Caco-2 (cell line): ENCODE measurements at regions of chr4 and their contacts with region 1.

Region 1: DNA sequence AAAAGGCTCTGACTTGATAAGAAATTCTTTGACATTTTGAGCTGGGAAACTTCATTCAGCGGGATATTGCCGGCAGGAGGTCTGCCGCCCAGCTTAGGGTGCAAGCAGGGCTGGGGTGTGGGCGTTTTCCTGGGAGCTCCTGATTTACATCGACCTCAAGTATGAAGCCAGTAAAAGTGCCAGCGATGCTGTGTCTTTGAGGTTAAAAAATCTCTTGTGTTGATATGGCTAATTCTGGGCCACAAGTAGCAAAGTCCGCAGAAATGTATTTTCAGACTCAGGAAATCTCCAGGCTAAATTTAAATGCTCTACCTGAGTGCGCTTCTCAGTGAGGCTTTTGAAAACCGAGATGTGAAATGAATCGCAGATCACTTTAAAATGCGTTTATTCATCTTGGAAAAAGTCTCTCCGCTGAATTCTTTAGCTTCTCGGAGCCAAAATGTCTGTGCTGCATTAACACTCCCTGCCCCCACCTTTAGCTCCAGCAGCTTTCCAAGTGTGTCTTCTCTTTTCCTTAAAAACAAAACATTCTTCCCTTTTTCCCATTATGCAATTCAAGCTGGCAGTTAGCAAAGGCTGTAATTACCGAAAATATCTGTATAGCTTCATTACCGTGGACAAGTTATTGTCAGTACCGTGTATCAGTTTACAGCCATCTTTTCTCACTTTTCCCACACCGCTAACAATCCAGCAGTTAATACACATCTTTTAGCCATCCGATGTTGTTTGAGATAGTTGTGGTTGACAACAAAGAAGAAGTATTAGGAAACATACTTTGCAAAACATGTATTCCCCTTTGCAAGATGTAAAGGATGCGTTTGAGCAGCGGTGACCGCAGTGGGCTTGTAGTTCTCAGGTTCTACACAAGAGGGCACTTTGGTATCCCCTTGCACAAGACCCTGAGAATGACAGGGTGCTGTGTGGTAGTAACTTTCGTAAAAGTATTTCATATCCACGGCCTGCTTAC is 136.0 kb upstream of the STX18 start:
- DNase-seq: peak in 1 of 2 experiments; percentile 17
- H3K4me3 ChIP-seq: no peak overlapping the region
- H3K4me3 Mint-ChIP-seq: no peak overlapping the region
- H3K27ac Mint-ChIP-seq: peak overlapping the region; percentile 37
- H3K4me1 ChIP-seq: peaks cover 29% of the 10 kb centered on the region
- H3K4me1 Mint-ChIP-seq: peaks cover 29% of the 10 kb centered on the region
- H3K27me3 ChIP-seq: no peaks in the 10 kb centered on the region
- H3K27me3 Mint-ChIP-seq: no peaks in the 10 kb centered on the region
- CTCF ChIP-seq: peak; percentile 15 to 44

Region 2: DNA sequence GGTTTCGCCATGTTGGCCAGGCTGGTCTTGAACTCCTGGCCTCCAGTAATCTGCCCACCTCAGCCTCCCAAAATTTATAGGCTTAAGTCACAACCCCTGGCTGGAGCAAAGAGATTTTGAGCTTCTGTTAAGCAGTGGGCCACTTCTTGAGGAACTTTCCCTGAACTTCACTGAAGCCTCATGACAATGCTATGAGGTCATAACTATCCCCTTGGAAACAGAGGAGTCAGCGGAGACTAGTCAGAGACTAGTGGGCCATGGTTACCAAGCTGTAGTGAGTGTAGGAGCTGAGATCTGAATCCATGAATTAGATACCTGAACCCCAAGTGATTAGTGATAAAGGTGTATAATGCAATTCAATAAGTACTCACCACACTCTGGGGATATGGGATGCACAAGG is 36.5 kb after region 1 on chr4:
- CTCF ChIA-PET with region 1: no interaction called
- POLR2A ChIA-PET with region 1: no interaction called
- intact Hi-C with region 1: no loop called
- DNase-seq: no peak
- H3K4me3 ChIP-seq: no peak overlapping the region
- H3K4me3 Mint-ChIP-seq: no peak overlapping the region
- H3K27ac Mint-ChIP-seq: no peak overlapping the region
- H3K4me1 ChIP-seq: peaks cover 20% of the 10 kb centered on the region
- H3K4me1 Mint-ChIP-seq: peaks cover 20% of the 10 kb centered on the region
- H3K27me3 ChIP-seq: no peaks in the 10 kb centered on the region
- H3K27me3 Mint-ChIP-seq: no peaks in the 10 kb centered on the region
- CTCF ChIP-seq: no peak

Region 3: GRCh38 chr4:4762909-4763821 is 85.3 kb after region 1 on chr4:
- CTCF ChIA-PET with region 1: no interaction called
- POLR2A ChIA-PET with region 1: no interaction called
- intact Hi-C with region 1: no loop called
- DNase-seq: no peak
- H3K4me3 ChIP-seq: no peak overlapping the region
- H3K4me3 Mint-ChIP-seq: no peak overlapping the region
- H3K27ac Mint-ChIP-seq: no peak overlapping the region
- H3K4me1 ChIP-seq: no peaks in the 10 kb centered on the region
- H3K4me1 Mint-ChIP-seq: no peaks in the 10 kb centered on the region
- H3K27me3 ChIP-seq: no peaks in the 10 kb centered on the region
- H3K27me3 Mint-ChIP-seq: no peaks in the 10 kb centered on the region
- CTCF ChIP-seq: no peak

Region 4: GRCh38 chr4:4780729-4781244 is 102.9 kb after region 1 on chr4:
- CTCF ChIA-PET with region 1: no interaction called
- POLR2A ChIA-PET with region 1: interaction called, 12 read pairs
- intact Hi-C with region 1: no loop called
- DNase-seq: no peak
- H3K4me3 ChIP-seq: no peak overlapping the region
- H3K4me3 Mint-ChIP-seq: no peak overlapping the region
- H3K27ac Mint-ChIP-seq: no peak overlapping the region
- H3K4me1 ChIP-seq: no peaks in the 10 kb centered on the region
- H3K4me1 Mint-ChIP-seq: no peaks in the 10 kb centered on the region
- H3K27me3 ChIP-seq: no peaks in the 10 kb centered on the region
- H3K27me3 Mint-ChIP-seq: no peaks in the 10 kb centered on the region
- CTCF ChIP-seq: no peak